ENCODE measurements at regions of chr6 and their contacts with region 1.

Region 1: DNA sequence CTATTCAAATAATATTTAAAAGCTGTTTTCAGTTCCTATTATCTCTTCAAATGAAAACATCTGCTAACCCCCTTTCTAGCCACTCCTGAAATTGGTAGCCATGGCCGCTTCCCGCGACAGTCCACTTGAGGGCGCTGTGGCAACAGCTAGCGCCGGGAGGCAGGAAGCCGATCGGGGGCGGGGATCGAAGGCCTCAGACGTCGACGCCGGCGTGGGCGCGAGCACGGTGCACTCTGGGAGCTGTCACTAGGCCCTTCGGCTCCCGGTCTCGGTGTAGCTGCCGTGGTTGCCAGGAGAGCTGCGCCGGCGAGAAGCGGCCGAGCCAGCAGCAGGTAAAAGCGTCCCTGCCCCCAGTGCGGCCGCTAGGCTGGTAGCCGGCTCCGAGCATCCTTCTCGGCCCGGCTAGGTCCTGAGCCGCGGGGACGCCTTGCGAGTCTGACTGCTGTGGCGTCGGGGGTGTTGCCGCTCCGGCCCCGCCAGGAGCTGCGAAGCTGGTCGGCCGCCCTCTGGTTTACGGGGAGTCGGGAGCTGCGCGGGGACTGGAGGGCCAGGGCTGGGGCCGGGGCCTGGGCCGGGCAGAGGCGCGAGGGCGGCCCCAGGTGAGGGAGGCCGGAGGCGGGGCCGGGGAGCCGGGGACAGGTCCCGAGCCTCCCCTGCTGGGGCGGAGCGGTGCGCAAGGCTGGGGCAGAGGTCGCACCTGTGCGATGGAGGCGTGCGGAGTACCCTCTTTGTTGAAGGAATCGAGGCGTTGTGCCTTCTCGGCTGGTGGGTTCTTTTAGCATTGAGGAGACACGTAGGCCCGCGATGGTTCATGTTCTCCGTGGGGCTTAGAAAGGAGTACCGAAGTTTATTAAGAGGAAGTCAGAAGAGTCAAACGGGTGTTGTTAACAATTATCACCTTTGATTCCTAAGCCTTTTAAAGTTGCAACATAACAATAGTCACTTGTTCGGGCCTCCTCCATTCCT is at the start of gene DOP1A:
- DNase-seq: peak; percentile 99
- H3K4me3 Mint-ChIP-seq: peak within 1 kb of the TSS; percentile 91
- H3K27ac Mint-ChIP-seq: peak within 1 kb of the TSS; percentile 85
- H3K4me1 Mint-ChIP-seq: peaks cover 34% of the 10 kb centered on the region
- H3K27me3 Mint-ChIP-seq: no peaks in the 10 kb centered on the region
- total RNA-seq, gene DOP1A: 5.6 and 6.2 TPM in 2 replicates

Region 2: DNA sequence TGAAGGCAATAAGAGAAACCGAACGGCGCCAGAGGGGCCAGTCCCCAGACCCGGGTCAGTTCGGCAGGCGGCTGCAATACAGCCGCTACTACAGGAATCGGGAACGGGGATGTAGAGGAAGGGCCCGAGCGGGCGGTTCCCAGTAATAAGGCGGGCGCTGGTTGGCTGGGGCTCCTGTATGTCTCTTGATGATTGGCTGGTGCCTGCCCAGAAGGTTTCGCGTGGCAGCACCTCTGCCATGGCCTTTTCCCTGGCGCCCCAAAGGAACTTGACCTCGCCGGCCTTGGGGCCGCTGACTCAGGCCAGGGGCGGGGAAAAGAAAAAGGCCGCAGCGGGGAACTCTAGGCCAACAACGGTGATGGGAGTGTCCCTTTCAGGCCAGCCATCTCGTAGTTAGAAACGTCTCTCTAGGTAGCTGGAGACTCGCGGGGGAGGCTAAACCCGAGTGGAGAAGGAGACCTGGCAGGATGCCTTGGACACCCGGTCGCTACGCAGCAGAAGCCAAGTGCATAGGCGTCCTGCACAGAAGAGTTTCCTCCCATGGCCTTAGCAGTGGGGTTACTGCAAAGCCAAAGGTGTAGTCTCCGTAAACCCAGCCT is 820.0 kb before region 1 on chr6 and contains the start of gene IBTK:
- intact Hi-C with region 1: loop called (anchors 1 kb)
- DNase-seq: peak; percentile 98
- H3K4me3 Mint-ChIP-seq: peak within 1 kb of the TSS; percentile 96
- H3K27ac Mint-ChIP-seq: peak within 1 kb of the TSS; percentile 96
- H3K4me1 Mint-ChIP-seq: peaks cover 24% of the 10 kb centered on the region
- H3K27me3 Mint-ChIP-seq: peaks cover 2% of the 10 kb centered on the region
- total RNA-seq, gene IBTK: 37.2 and 37.7 TPM in 2 replicates

Region 3: GRCh38 chr6:83055366-83055964 is 12.3 kb before region 1 on chr6:
- intact Hi-C with region 1: no loop called
- DNase-seq: peak; percentile 81
- H3K4me3 Mint-ChIP-seq: no peak overlapping the region
- H3K27ac Mint-ChIP-seq: no peak overlapping the region
- H3K4me1 Mint-ChIP-seq: peaks cover 6% of the 10 kb centered on the region
- H3K27me3 Mint-ChIP-seq: no peaks in the 10 kb centered on the region

Region 4: DNA sequence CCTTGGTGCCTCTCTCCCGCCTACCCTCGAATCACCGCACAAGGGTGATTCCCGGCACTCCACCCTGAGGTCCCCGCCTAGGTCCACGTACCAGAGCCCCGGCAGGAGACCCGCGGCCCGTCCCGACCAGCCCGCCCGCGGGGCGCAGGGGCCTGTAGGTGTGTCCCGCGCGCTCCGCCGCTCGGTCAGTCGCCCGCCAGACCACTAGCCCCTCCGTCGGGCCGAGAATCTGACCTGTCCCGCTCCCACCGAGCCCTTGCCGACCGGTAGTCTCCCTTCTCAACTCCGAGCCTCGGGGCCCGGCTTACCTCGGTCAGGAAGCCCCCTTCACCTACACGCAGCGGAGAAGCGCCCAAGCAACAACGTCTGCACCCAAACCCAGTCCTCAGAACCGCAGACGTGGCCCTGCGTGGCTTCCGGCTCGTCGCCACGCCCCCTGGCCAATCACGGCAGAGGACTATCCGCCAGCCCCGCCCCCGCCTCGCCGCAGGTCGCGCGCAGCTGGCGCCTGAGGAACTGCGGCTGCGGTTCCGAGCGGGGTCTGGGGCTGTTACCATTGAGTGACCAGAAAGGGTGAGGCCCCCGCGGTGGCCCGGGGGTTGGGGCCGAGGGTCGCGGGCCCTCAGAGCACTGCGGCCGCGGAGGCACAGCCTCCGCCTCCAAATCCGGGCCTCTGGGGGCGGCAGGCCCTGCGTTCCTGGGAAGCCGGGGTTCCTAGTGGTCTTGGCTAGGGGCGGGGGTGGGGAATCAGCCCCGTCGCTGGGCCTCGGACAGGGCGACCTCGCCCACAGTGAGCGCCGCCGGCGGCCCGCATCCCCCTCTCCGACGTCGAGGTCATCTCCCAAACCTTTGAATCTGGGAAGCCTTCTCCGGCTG is 125.4 kb after region 1 on chr6 and contains the starts of genes PGM3 and RWDD2A:
- intact Hi-C with region 1: loop called (anchors 1 kb)
- DNase-seq: peak; percentile 97
- H3K4me3 Mint-ChIP-seq: peak within 1 kb of the TSS; percentile 99
- H3K27ac Mint-ChIP-seq: peak within 1 kb of the TSS; percentile 97
- H3K4me1 Mint-ChIP-seq: peaks cover 26% of the 10 kb centered on the region
- H3K27me3 Mint-ChIP-seq: peaks cover 3% of the 10 kb centered on the region
- total RNA-seq, gene PGM3: 19.7 and 24.7 TPM in 2 replicates
- total RNA-seq, gene RWDD2A: 1.1 and 1.4 TPM in 2 replicates

Region 5: GRCh38 chr6:83221889-83222479 is 154.3 kb after region 1 on chr6:
- intact Hi-C with region 1: loop called (anchors 2 kb)
- DNase-seq: no peak
- H3K4me3 Mint-ChIP-seq: no peak overlapping the region
- H3K27ac Mint-ChIP-seq: no peak overlapping the region
- H3K4me1 Mint-ChIP-seq: no peaks in the 10 kb centered on the region
- H3K27me3 Mint-ChIP-seq: peaks cover 3% of the 10 kb centered on the region

Region 6: DNA sequence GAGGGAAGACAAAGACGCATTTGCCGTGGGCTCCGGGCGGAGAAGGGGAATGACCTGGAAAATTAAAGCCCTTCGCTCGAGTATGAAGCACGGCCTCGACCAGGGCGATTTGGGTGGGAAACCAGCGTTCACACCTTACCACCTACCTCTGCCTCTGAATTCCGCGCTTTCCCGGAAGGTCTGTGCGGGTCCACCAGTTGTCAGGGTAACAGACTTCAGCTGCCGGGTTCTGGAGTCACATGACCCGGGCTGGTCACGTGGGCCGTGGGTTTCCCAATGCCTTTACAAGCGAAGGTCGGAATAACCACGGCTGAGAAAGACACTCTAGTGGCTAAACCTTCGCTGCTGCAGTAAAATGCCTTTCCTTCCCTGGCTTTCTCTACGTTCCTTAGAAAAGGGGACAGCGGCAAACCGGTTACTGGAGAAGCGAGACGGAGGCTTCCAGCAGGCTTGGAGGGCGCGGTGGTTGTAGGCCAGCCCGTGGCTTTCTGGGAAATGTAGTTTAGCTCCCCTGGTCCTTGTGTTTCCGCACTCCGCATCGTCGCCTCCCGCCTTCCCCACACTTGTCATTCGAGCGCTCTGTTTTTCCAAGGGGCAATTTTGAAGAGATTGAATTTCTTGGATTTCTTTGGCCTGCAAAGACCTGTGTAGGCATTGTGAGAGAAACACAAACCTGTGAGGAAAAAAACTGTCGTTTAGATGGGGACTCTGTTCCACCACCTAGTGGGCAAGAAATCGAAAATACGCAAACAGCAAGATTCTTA is 1159.9 kb after region 1 on chr6 and contains the start of gene CEP162:
- intact Hi-C with region 1: loop called (anchors 5 kb)
- DNase-seq: peak; percentile 97
- H3K4me3 Mint-ChIP-seq: peak within 1 kb of the TSS; percentile 98
- H3K27ac Mint-ChIP-seq: peak within 1 kb of the TSS; percentile 89
- H3K4me1 Mint-ChIP-seq: peaks cover 17% of the 10 kb centered on the region
- H3K27me3 Mint-ChIP-seq: peaks cover 13% of the 10 kb centered on the region
- total RNA-seq, gene CEP162: 3.5 and 4.0 TPM in 2 replicates